Activated CD8-positive, alpha-beta T cell treated with anti-CD3 and anti-CD28 coated beads for 36 hours (primary cell): ENCODE measurements at regions of chr7 and their contacts with region 1.

Region 1: GRCh38 chr7:7424151-7424873 is 111.4 kb downstream of the COL28A1 start:
- DNase-seq: peak; percentile 62
- ATAC-seq: peak; percentile 85
- H3K4me3 Mint-ChIP-seq: peak overlapping the region; percentile 68
- H3K27ac Mint-ChIP-seq: peak overlapping the region; percentile 55
- H3K4me1 Mint-ChIP-seq: peaks cover 10% of the 10 kb centered on the region
- H3K27me3 Mint-ChIP-seq: no peaks in the 10 kb centered on the region
- CTCF ChIP-seq: peak; percentile 50

Region 2: GRCh38 chr7:7535691-7536090 is 111.4 kb after region 1 on chr7 and contains the start of gene COL28A1:
- CTCF ChIA-PET with region 1: interaction called, 4 read pairs
- POLR2A ChIA-PET with region 1: no interaction called
- intact Hi-C with region 1: loop called (anchors 10 kb)
- DNase-seq: no peak
- ATAC-seq: no peak
- H3K4me3 Mint-ChIP-seq: no peak within 1 kb of the TSS
- H3K27ac Mint-ChIP-seq: no peak within 1 kb of the TSS
- H3K4me1 Mint-ChIP-seq: no peaks in the 10 kb centered on the region
- H3K27me3 Mint-ChIP-seq: peaks cover 6% of the 10 kb centered on the region
- CTCF ChIP-seq: no peak
- total RNA-seq, gene COL28A1: not detected

Region 3: GRCh38 chr7:8217200-8218068 is 793.1 kb after region 1 on chr7:
- CTCF ChIA-PET with region 1: no interaction called
- POLR2A ChIA-PET with region 1: no interaction called
- intact Hi-C with region 1: loop called (anchors 10 kb)
- DNase-seq: peak; percentile 26
- ATAC-seq: peak; percentile 60
- H3K4me3 Mint-ChIP-seq: no peak overlapping the region
- H3K27ac Mint-ChIP-seq: no peak overlapping the region
- H3K4me1 Mint-ChIP-seq: peaks cover 2% of the 10 kb centered on the region
- H3K27me3 Mint-ChIP-seq: no peaks in the 10 kb centered on the region
- CTCF ChIP-seq: peak; percentile 86